ENCODE measurements at regions of chr5 and their contacts with region 1.

Region 1: GRCh38 chr5:132736853-132737833 is at the start of gene KIF3A:
- DNase-seq: peak; percentile 99
- H3K4me3 Mint-ChIP-seq: peak within 1 kb of the TSS; percentile 84
- H3K27ac Mint-ChIP-seq: peak within 1 kb of the TSS; percentile 50
- H3K4me1 Mint-ChIP-seq: peaks cover 27% of the 10 kb centered on the region
- H3K27me3 Mint-ChIP-seq: no peaks in the 10 kb centered on the region
- total RNA-seq, gene KIF3A: 5.0 to 6.1 TPM

Region 2: GRCh38 chr5:132556763-132557477 is 180.2 kb before region 1 on chr5 and contains the start of gene RAD50:
- CTCF ChIA-PET with region 1: no interaction called
- intact Hi-C with region 1: loop called (anchors 2 kb)
- DNase-seq: peak; percentile 96
- H3K4me3 Mint-ChIP-seq: peak within 1 kb of the TSS; percentile 98
- H3K27ac Mint-ChIP-seq: peak within 1 kb of the TSS; percentile 94
- H3K4me1 Mint-ChIP-seq: peaks cover 15% of the 10 kb centered on the region
- H3K27me3 Mint-ChIP-seq: no peaks in the 10 kb centered on the region
- total RNA-seq, gene RAD50: 39.1 to 42.4 TPM

Region 3: GRCh38 chr5:132688536-132689339 is 48.4 kb before region 1 on chr5:
- CTCF ChIA-PET with region 1: no interaction called
- intact Hi-C with region 1: loop called (anchors 2 kb)
- DNase-seq: peak; percentile 69
- H3K4me3 Mint-ChIP-seq: no peak overlapping the region
- H3K27ac Mint-ChIP-seq: peak overlapping the region; percentile 17
- H3K4me1 Mint-ChIP-seq: peaks cover 27% of the 10 kb centered on the region
- H3K27me3 Mint-ChIP-seq: no peaks in the 10 kb centered on the region

Region 4: DNA sequence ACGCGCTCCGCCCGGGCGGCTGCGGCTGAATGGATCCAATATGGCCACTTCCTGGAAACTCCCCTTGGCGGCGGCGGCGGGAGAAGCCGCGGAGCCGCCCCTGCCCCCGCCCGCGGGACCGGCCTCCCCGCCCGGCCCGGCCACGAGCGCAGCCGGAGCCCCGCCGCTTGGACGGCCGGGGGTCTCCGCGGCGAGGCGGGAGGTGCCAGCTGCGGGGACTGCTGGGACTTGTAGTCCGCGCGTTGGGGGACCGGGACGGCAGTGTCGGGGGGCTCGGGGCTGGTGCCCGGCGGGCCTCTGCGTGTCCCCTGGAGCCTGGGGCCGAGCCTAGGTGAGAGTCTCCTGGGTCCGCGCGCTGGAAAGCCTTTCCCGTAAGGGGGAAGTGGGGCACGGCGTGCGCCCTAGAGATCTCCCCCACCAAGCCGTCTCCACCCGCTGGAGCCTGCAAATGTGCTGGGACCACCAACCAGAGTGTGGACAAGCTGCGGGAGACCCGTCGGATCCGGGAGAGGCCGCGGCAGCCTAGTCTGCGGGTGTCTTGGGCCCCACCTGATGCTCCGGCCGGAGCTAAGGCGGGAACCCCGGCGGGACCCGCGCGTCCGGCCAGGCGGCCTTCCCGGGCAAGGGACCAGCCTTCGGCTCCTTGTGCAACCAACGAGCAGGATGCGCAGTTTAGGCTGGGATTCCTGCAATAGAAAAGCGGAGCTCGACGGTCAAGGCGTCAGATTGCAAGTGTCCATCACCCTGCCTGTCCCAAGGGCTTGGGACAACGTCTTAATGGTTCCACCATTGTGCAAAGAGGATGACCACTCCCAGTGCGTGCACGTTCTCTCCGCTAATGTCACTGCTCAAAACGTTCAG is 40.3 kb after region 1 on chr5 and contains the start of gene SEPTIN8:
- CTCF ChIA-PET with region 1: no interaction called
- intact Hi-C with region 1: loop called (anchors 2 kb)
- DNase-seq: peak; percentile 55
- H3K4me3 Mint-ChIP-seq: peak within 1 kb of the TSS; percentile 67
- H3K27ac Mint-ChIP-seq: no peak within 1 kb of the TSS
- H3K4me1 Mint-ChIP-seq: peaks cover 10% of the 10 kb centered on the region
- H3K27me3 Mint-ChIP-seq: peaks cover 26% of the 10 kb centered on the region
- total RNA-seq, gene SEPTIN8: 24.9 to 29.2 TPM

Region 5: DNA sequence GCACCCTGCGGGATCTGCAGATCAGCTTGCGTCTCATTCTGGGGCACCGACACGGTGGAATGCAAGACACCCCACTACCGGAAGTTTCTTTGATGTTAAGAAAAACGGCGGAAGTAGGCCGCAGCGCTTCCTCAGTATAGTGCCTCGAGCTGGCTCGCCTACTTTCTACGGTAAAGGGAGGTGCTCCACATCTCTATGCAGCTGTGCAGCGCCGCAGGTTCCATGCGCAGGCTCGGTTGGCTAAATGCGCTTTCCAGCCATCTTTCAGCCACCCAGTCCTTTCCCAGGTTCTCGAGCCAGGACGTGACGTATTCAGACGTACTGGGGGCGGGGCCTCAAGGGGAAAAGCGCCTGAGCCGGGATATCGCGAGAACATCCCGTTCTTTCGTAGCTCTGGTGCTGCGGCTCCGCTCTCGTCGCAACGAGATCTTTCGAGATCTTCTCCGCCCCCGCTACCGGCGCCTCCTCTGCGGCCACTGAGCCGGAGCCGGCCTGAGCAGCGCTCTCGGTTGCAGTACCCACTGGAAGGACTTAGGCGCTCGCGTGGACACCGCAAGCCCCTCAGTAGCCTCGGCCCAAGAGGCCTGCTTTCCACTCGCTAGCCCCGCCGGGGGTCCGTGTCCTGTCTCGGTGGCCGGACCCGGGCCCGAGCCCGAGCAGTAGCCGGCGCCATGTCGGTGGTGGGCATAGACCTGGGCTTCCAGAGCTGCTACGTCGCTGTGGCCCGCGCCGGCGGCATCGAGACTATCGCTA is 314.6 kb after region 1 on chr5 and contains the start of gene HSPA4:
- CTCF ChIA-PET with region 1: no interaction called
- intact Hi-C with region 1: loop called (anchors 5 kb)
- DNase-seq: peak; percentile 99
- H3K4me3 Mint-ChIP-seq: peak within 1 kb of the TSS; percentile 98
- H3K27ac Mint-ChIP-seq: peak within 1 kb of the TSS; percentile 99
- H3K4me1 Mint-ChIP-seq: peaks cover 42% of the 10 kb centered on the region
- H3K27me3 Mint-ChIP-seq: no peaks in the 10 kb centered on the region
- total RNA-seq, gene HSPA4: 180 to 190 TPM